PC-9 (cell line): ENCODE measurements at regions of chr6 and their contacts with region 1.

Region 1: DNA sequence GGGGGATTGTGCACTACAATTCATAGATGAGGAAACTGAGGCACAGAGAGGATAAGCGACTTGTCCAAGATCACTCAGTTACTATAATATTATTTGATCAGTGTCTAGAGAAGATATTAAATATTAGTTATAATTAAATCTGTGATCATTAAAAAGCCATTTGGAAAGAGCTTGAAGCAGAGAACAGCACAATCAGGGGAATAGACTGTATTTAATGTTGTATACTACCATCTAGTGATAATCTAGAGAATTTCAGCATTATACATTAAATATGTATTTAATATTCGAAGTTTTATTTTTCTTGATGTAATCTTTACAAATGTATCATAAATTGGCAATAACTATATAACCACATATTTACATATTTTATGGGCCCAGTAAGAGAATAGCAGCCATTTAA is 20.1 kb upstream of the MTCL3 start:
- DNase-seq: peak in 1 of 2 experiments; percentile 40
- H3K4me3 ChIP-seq: no peak overlapping the region
- H3K27ac ChIP-seq: no peak overlapping the region
- H3K4me1 ChIP-seq: no peaks in the 10 kb centered on the region
- H3K27me3 ChIP-seq: no peaks in the 10 kb centered on the region
- CTCF ChIP-seq: peak; percentile 77

Region 2: DNA sequence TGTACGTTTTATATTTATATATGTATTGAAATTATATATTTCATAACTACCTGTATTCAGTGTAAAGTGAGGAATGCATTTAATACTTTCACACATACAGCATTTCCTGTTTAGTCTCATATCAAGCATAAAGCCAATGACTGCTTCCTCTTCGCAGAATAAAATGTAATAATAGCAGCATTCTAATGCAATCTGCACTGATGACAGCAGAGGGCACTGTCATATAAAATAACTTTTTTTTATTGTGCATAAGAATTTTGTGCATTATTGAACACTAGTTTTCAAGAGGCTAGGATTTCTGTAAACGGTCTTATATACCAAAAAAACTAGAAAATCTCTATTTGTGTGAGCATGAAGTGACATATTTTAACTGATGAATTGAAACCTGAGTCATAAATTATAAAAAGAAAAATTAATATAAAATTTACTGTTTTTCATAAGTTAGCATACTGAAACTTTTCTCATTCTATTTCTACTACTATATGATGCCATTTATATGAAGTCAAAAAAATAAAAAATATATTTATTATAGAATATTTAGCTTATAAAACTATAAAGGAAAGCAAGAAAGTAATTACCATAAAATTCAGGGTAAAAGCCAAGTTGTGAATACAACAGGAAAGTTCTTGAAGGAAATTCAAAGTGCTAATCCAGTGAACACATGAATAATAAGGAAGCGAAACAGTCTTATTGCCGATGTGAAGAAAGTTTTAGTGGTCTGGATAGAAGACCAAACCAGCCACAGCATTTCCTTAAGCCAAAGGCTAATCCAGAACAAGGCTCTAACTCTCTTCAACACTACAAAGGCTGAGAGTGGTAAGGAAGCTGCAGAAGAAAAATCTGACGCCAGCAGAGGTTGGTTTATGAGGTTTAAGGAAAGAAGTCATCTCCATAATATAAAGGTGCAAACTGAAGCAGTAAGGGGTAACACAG is 236.3 kb before region 1 on chr6:
- CTCF ChIA-PET with region 1: interaction called, 8 read pairs
- POLR2A ChIA-PET with region 1: no interaction called
- intact Hi-C with region 1: loop called (anchors 2 kb)
- DNase-seq: peak; percentile 18 to 59
- H3K4me3 ChIP-seq: no peak overlapping the region
- H3K27ac ChIP-seq: no peak overlapping the region
- H3K4me1 ChIP-seq: peaks cover 6% of the 10 kb centered on the region; the same call in 1 of the 2 replicates
- H3K27me3 ChIP-seq: no peaks in the 10 kb centered on the region
- CTCF ChIP-seq: peak; percentile 93

Region 3: GRCh38 chr6:127516666-127517273 is 22.5 kb before region 1 on chr6:
- CTCF ChIA-PET with region 1: interaction called, 11 read pairs
- POLR2A ChIA-PET with region 1: no interaction called
- intact Hi-C with region 1: loop called (anchors 2 kb)
- DNase-seq: peak; percentile 16 to 44
- H3K4me3 ChIP-seq: peak overlapping the region; percentile 70
- H3K27ac ChIP-seq: no peak overlapping the region
- H3K4me1 ChIP-seq: peaks cover 9% of the 10 kb centered on the region; the same call in 1 of the 2 replicates
- H3K27me3 ChIP-seq: peaks cover 8% of the 10 kb centered on the region; the same call in 1 of the 2 replicates
- CTCF ChIP-seq: peak; percentile 89

Region 4: GRCh38 chr6:127641905-127642304 is 102.6 kb after region 1 on chr6:
- CTCF ChIA-PET with region 1: interaction called, 4 read pairs
- POLR2A ChIA-PET with region 1: interaction called, 12 read pairs
- intact Hi-C with region 1: no loop called
- DNase-seq: peak in 1 of 2 experiments; percentile 3
- H3K4me3 ChIP-seq: no peak overlapping the region
- H3K27ac ChIP-seq: no peak overlapping the region
- H3K4me1 ChIP-seq: no peaks in the 10 kb centered on the region
- H3K27me3 ChIP-seq: no peaks in the 10 kb centered on the region
- CTCF ChIP-seq: peak; percentile 85